ENCODE measurements at regions of chr17 and their contacts with region 1.

Region 1: DNA sequence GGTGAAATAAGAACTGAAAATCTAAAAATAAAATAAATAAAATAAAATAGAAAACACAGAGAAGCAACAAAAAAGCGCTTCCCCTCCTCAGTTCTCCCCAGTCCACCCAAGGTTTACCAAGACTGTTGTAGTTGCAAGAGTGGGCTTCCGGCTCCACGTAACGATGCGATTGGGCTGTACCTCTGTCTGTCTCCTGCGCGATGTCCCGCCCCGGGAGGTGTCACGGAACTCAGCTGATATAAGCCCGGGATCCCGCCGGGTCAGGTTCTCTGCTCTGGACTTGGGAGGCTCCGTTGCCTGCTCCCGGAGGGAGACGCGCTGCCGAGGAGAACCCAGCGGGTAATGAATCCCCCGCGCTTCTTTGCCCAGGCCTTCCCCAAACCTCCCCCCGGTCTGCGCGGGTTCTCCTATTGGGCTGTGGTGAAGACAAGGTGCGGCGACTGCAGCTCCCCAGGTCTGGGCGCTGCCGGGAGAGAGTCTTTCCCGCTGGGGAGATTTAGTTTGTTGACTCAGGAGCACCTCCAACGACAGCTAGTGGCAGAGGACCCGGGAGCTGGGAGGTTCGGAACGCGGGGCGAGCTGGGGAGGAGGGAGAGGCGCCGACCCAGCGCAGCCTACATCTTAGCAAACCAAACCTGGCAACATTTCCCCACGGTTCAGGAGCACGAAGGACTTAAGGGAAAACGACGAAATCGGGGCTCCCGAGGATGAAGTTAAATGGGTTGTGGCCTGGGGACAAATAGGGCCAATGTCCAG is at the start of gene SLFN5:
- DNase-seq: peak; percentile 87 to 98 (median 94)
- ATAC-seq: peak; percentile 71
- H3K4me3 ChIP-seq: peak within 1 kb of the TSS; percentile 92
- H3K4me3 Mint-ChIP-seq: peak within 1 kb of the TSS; percentile 94
- H3K27ac ChIP-seq: peak within 1 kb of the TSS; percentile 94 to 96
- H3K27ac Mint-ChIP-seq: peak within 1 kb of the TSS; percentile 100
- H3K4me1 ChIP-seq: peaks cover 46% of the 10 kb centered on the region
- H3K4me1 Mint-ChIP-seq: peaks cover 63% of the 10 kb centered on the region
- H3K27me3 ChIP-seq: no peaks in the 10 kb centered on the region
- H3K27me3 Mint-ChIP-seq: no peaks in the 10 kb centered on the region
- CTCF ChIP-seq: no peak
- total RNA-seq, gene SLFN5: 46.7 to 47.0 TPM

Region 2: GRCh38 chr17:34556384-34556783 is 686.6 kb before region 1 on chr17:
- CTCF ChIA-PET with region 1: no interaction called
- POLR2A ChIA-PET with region 1: no interaction called
- intact Hi-C with region 1: no loop called
- DNase-seq: no peak
- ATAC-seq: no peak
- H3K4me3 ChIP-seq: no peak overlapping the region
- H3K4me3 Mint-ChIP-seq: no peak overlapping the region
- H3K27ac ChIP-seq: no peak overlapping the region
- H3K27ac Mint-ChIP-seq: no peak overlapping the region
- H3K4me1 ChIP-seq: no peaks in the 10 kb centered on the region
- H3K4me1 Mint-ChIP-seq: no peaks in the 10 kb centered on the region
- H3K27me3 ChIP-seq: no peaks in the 10 kb centered on the region
- H3K27me3 Mint-ChIP-seq: peaks cover 23% of the 10 kb centered on the region
- CTCF ChIP-seq: no peak

Region 3: DNA sequence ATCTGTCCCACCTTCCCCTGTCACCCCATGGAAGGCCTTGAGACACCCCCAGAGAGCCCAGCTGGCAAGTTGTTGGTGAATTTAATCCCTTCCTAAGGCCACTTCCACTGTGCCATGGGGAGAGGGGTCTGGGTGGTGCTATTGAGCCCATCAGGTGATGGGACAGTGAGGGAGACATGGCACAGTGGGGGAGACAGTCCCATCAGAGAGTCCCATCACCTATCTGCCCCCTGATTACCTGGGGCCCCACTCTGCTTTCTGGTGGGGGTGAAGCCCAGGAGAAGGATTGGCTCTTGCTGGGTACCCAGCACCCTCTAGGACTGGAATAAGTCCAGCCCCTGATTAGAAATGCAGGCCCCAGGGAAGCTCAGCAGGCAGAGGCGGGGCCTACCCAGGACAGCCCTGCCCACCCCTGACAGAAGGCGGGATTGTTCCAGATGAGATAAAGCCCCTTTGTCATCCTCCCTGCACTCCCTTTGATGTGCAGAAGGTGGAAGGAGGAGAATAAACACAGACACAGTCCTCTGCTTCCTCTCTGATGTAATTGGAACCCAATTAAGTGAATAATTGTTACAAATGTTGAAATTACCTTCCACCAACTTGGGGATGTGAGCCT is 644.7 kb before region 1 on chr17:
- CTCF ChIA-PET with region 1: no interaction called
- POLR2A ChIA-PET with region 1: no interaction called
- intact Hi-C with region 1: no loop called
- DNase-seq: no peak
- ATAC-seq: no peak
- H3K4me3 ChIP-seq: no peak overlapping the region
- H3K4me3 Mint-ChIP-seq: no peak overlapping the region
- H3K27ac ChIP-seq: no peak overlapping the region
- H3K27ac Mint-ChIP-seq: no peak overlapping the region
- H3K4me1 ChIP-seq: no peaks in the 10 kb centered on the region
- H3K4me1 Mint-ChIP-seq: no peaks in the 10 kb centered on the region
- H3K27me3 ChIP-seq: peaks cover 0 to 3% of the 10 kb centered on the region in 2 experiments
- H3K27me3 Mint-ChIP-seq: peaks cover 22% of the 10 kb centered on the region
- CTCF ChIP-seq: no peak

Region 4: GRCh38 chr17:35103271-35103670 is 139.7 kb before region 1 on chr17:
- CTCF ChIA-PET with region 1: no interaction called
- POLR2A ChIA-PET with region 1: no interaction called
- intact Hi-C with region 1: no loop called
- DNase-seq: no peak
- ATAC-seq: no peak
- H3K4me3 ChIP-seq: no peak overlapping the region
- H3K4me3 Mint-ChIP-seq: no peak overlapping the region
- H3K27ac ChIP-seq: no peak overlapping the region
- H3K27ac Mint-ChIP-seq: no peak overlapping the region
- H3K4me1 ChIP-seq: no peaks in the 10 kb centered on the region
- H3K4me1 Mint-ChIP-seq: no peaks in the 10 kb centered on the region
- H3K27me3 ChIP-seq: no peaks in the 10 kb centered on the region
- H3K27me3 Mint-ChIP-seq: no peaks in the 10 kb centered on the region
- CTCF ChIP-seq: no peak

Region 5: GRCh38 chr17:35127751-35128514 is 115.0 kb before region 1 on chr17:
- CTCF ChIA-PET with region 1: no interaction called
- POLR2A ChIA-PET with region 1: no interaction called
- intact Hi-C with region 1: no loop called
- DNase-seq: no peak
- ATAC-seq: no peak
- H3K4me3 ChIP-seq: no peak overlapping the region
- H3K4me3 Mint-ChIP-seq: no peak overlapping the region
- H3K27ac ChIP-seq: no peak overlapping the region
- H3K27ac Mint-ChIP-seq: no peak overlapping the region
- H3K4me1 ChIP-seq: no peaks in the 10 kb centered on the region
- H3K4me1 Mint-ChIP-seq: no peaks in the 10 kb centered on the region
- H3K27me3 ChIP-seq: no peaks in the 10 kb centered on the region
- H3K27me3 Mint-ChIP-seq: no peaks in the 10 kb centered on the region
- CTCF ChIP-seq: no peak

Region 6: GRCh38 chr17:35189291-35189690 is 53.7 kb before region 1 on chr17:
- CTCF ChIA-PET with region 1: interaction called, 8 read pairs
- POLR2A ChIA-PET with region 1: interaction called, 24 read pairs
- intact Hi-C with region 1: no loop called
- DNase-seq: no peak
- ATAC-seq: no peak
- H3K4me3 ChIP-seq: peak overlapping the region; percentile 3 to 33
- H3K4me3 Mint-ChIP-seq: peak overlapping the region; percentile 79
- H3K27ac ChIP-seq: peak overlapping the region; percentile 7 to 52
- H3K27ac Mint-ChIP-seq: peak overlapping the region; percentile 92
- H3K4me1 ChIP-seq: peaks cover 66% of the 10 kb centered on the region
- H3K4me1 Mint-ChIP-seq: peaks cover 79% of the 10 kb centered on the region
- H3K27me3 ChIP-seq: no peaks in the 10 kb centered on the region
- H3K27me3 Mint-ChIP-seq: no peaks in the 10 kb centered on the region
- CTCF ChIP-seq: no peak

Region 7: GRCh38 chr17:35254107-35254802 is 11.3 kb after region 1 on chr17:
- CTCF ChIA-PET with region 1: interaction called, 7 read pairs
- POLR2A ChIA-PET with region 1: interaction called, 13 read pairs
- intact Hi-C with region 1: loop called in 1 of 2 experiments (anchors 1 kb)
- DNase-seq: peak in 1 of 9 experiments; percentile 28
- ATAC-seq: no peak
- H3K4me3 ChIP-seq: no peak overlapping the region
- H3K4me3 Mint-ChIP-seq: no peak overlapping the region
- H3K27ac ChIP-seq: no peak overlapping the region
- H3K27ac Mint-ChIP-seq: peak overlapping the region; percentile 91
- H3K4me1 ChIP-seq: peaks cover 66% of the 10 kb centered on the region
- H3K4me1 Mint-ChIP-seq: peaks cover 90% of the 10 kb centered on the region
- H3K27me3 ChIP-seq: no peaks in the 10 kb centered on the region
- H3K27me3 Mint-ChIP-seq: no peaks in the 10 kb centered on the region
- CTCF ChIP-seq: no peak

Region 8: GRCh38 chr17:35373534-35373983 is 130.6 kb after region 1 on chr17 and contains the start of gene SLFN11:
- CTCF ChIA-PET with region 1: no interaction called
- POLR2A ChIA-PET with region 1: interaction called, 6 read pairs
- intact Hi-C with region 1: loop called (anchors 2 kb)
- DNase-seq: peak; percentile 63 to 95 (median 78)
- ATAC-seq: peak; percentile 88
- H3K4me3 ChIP-seq: peak within 1 kb of the TSS; percentile 85 to 95
- H3K4me3 Mint-ChIP-seq: peak within 1 kb of the TSS; percentile 99
- H3K27ac ChIP-seq: peak within 1 kb of the TSS; percentile 83 to 99
- H3K27ac Mint-ChIP-seq: peak within 1 kb of the TSS; percentile 98
- H3K4me1 ChIP-seq: peaks cover 19% of the 10 kb centered on the region
- H3K4me1 Mint-ChIP-seq: peaks cover 52% of the 10 kb centered on the region
- H3K27me3 ChIP-seq: no peaks in the 10 kb centered on the region
- H3K27me3 Mint-ChIP-seq: no peaks in the 10 kb centered on the region
- CTCF ChIP-seq: no peak
- total RNA-seq, gene SLFN11: 25.6 to 27.2 TPM

Region 9: GRCh38 chr17:35531160-35531559 is 288.2 kb after region 1 on chr17:
- CTCF ChIA-PET with region 1: interaction called, 54 read pairs
- POLR2A ChIA-PET with region 1: interaction called, 64 read pairs
- intact Hi-C with region 1: loop called (anchors 1 kb)
- DNase-seq: peak in 2 of 9 experiments; percentile 50 to 71
- ATAC-seq: peak; percentile 42
- H3K4me3 ChIP-seq: peak overlapping the region in 1 of 2 experiments; percentile 1
- H3K4me3 Mint-ChIP-seq: peak overlapping the region; percentile 27
- H3K27ac ChIP-seq: peak overlapping the region; percentile 42 to 66
- H3K27ac Mint-ChIP-seq: peak overlapping the region; percentile 96
- H3K4me1 ChIP-seq: peaks cover 57% of the 10 kb centered on the region
- H3K4me1 Mint-ChIP-seq: peaks cover 72% of the 10 kb centered on the region
- H3K27me3 ChIP-seq: no peaks in the 10 kb centered on the region
- H3K27me3 Mint-ChIP-seq: no peaks in the 10 kb centered on the region
- CTCF ChIP-seq: no peak

Region 10: GRCh38 chr17:35808962-35809854 is 566.2 kb after region 1 on chr17 and contains the start of gene TAF15:
- CTCF ChIA-PET with region 1: no interaction called
- POLR2A ChIA-PET with region 1: no interaction called
- intact Hi-C with region 1: loop called (anchors 2 to 10 kb)
- DNase-seq: peak; percentile 90 to 98 (median 95)
- ATAC-seq: peak; percentile 90
- H3K4me3 ChIP-seq: peak within 1 kb of the TSS; percentile 64 to 71
- H3K4me3 Mint-ChIP-seq: peak within 1 kb of the TSS; percentile 98
- H3K27ac ChIP-seq: peak within 1 kb of the TSS; percentile 77 to 92
- H3K27ac Mint-ChIP-seq: peak within 1 kb of the TSS; percentile 99
- H3K4me1 ChIP-seq: peaks cover 48% of the 10 kb centered on the region
- H3K4me1 Mint-ChIP-seq: peaks cover 68% of the 10 kb centered on the region
- H3K27me3 ChIP-seq: no peaks in the 10 kb centered on the region
- H3K27me3 Mint-ChIP-seq: no peaks in the 10 kb centered on the region
- CTCF ChIP-seq: peak; percentile 74
- total RNA-seq, gene TAF15: 118 to 121 TPM